ENCODE measurements at regions of chr2 and their contacts with region 1.

Region 1: GRCh38 chr2:234544659-234545611 is 48.1 kb upstream of the ARL4C start:
- H3K4me3 Mint-ChIP-seq: no peak overlapping the region
- H3K27ac Mint-ChIP-seq: no peak overlapping the region
- H3K4me1 Mint-ChIP-seq: no peaks in the 10 kb centered on the region
- H3K27me3 Mint-ChIP-seq: peaks cover 18% of the 10 kb centered on the region

Region 2: GRCh38 chr2:233854241-233854981 is 690.5 kb before region 1 on chr2 and contains the start of gene HJURP:
- intact Hi-C with region 1: loop called (anchors 10 kb)
- H3K4me3 Mint-ChIP-seq: peak within 1 kb of the TSS; percentile 95
- H3K27ac Mint-ChIP-seq: peak within 1 kb of the TSS; percentile 35
- H3K4me1 Mint-ChIP-seq: peaks cover 41% of the 10 kb centered on the region
- H3K27me3 Mint-ChIP-seq: no peaks in the 10 kb centered on the region

Region 3: DNA sequence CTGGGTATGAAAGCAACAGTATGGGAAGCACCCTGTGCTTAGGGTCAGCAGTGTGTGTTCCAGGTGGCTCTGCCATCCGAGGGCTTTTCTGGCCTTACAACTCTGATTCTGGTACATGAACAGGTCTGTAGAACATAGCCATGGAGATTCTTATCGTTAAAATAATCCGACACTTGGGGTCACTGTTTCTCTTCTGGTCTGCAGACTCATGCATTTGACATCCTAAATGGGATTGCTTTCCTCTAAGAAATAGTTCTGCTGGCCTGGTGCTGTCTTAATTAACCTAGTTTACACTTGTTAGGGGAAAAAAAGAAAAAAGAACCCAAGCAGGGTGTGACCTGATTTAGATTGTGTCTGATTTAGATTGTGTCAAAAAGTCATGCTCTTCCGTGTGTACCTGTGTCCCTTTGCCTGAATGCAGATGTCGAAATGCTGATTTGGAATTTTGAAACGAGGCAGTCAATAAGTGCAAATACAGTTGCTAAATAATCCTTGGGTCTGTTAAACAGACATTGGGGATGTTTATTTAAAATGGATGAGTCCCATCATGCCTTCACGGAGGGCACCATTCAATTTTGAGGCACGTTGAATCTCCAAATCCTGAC is 568.1 kb before region 1 on chr2:
- intact Hi-C with region 1: loop called (anchors 5 kb)
- H3K4me3 Mint-ChIP-seq: no peak overlapping the region
- H3K27ac Mint-ChIP-seq: no peak overlapping the region
- H3K4me1 Mint-ChIP-seq: no peaks in the 10 kb centered on the region
- H3K27me3 Mint-ChIP-seq: peaks cover 7% of the 10 kb centered on the region

Region 4: GRCh38 chr2:234135720-234136221 is 409.2 kb before region 1 on chr2:
- intact Hi-C with region 1: loop called (anchors 1 kb)
- H3K4me3 Mint-ChIP-seq: no peak overlapping the region
- H3K27ac Mint-ChIP-seq: no peak overlapping the region
- H3K4me1 Mint-ChIP-seq: no peaks in the 10 kb centered on the region
- H3K27me3 Mint-ChIP-seq: peaks cover 1% of the 10 kb centered on the region

Region 5: GRCh38 chr2:234533626-234534025 is 11.3 kb before region 1 on chr2:
- intact Hi-C with region 1: no loop called
- H3K4me3 Mint-ChIP-seq: no peak overlapping the region
- H3K27ac Mint-ChIP-seq: no peak overlapping the region
- H3K4me1 Mint-ChIP-seq: no peaks in the 10 kb centered on the region
- H3K27me3 Mint-ChIP-seq: peaks cover 5% of the 10 kb centered on the region

Region 6: GRCh38 chr2:234823877-234824376 is 279.0 kb after region 1 on chr2:
- intact Hi-C with region 1: no loop called
- H3K4me3 Mint-ChIP-seq: no peak overlapping the region
- H3K27ac Mint-ChIP-seq: no peak overlapping the region
- H3K4me1 Mint-ChIP-seq: no peaks in the 10 kb centered on the region
- H3K27me3 Mint-ChIP-seq: no peaks in the 10 kb centered on the region